ENCODE measurements at regions of chr11 and their contacts with region 1.

Region 1: GRCh38 chr11:31509429-31510345 is at the starts of genes ELP4 and IMMP1L:
- DNase-seq: peak; percentile 97
- ATAC-seq: peak; percentile 100
- H3K4me3 Mint-ChIP-seq: peak within 1 kb of the TSS; percentile 98
- H3K27ac Mint-ChIP-seq: peak within 1 kb of the TSS; percentile 88
- H3K4me1 Mint-ChIP-seq: peaks cover 36% of the 10 kb centered on the region
- H3K27me3 Mint-ChIP-seq: no peaks in the 10 kb centered on the region
- total RNA-seq, gene ELP4: 21.9 to 30.9 TPM
- total RNA-seq, gene IMMP1L: 18.8 to 21.0 TPM

Region 2: GRCh38 chr11:31484497-31484896 is 25.2 kb before region 1 on chr11:
- CTCF ChIA-PET with region 1: no interaction called
- POLR2A ChIA-PET with region 1: no interaction called
- intact Hi-C with region 1: no loop called
- DNase-seq: no peak
- ATAC-seq: no peak
- H3K4me3 Mint-ChIP-seq: no peak overlapping the region
- H3K27ac Mint-ChIP-seq: no peak overlapping the region
- H3K4me1 Mint-ChIP-seq: peaks cover 2% of the 10 kb centered on the region
- H3K27me3 Mint-ChIP-seq: no peaks in the 10 kb centered on the region

Region 3: DNA sequence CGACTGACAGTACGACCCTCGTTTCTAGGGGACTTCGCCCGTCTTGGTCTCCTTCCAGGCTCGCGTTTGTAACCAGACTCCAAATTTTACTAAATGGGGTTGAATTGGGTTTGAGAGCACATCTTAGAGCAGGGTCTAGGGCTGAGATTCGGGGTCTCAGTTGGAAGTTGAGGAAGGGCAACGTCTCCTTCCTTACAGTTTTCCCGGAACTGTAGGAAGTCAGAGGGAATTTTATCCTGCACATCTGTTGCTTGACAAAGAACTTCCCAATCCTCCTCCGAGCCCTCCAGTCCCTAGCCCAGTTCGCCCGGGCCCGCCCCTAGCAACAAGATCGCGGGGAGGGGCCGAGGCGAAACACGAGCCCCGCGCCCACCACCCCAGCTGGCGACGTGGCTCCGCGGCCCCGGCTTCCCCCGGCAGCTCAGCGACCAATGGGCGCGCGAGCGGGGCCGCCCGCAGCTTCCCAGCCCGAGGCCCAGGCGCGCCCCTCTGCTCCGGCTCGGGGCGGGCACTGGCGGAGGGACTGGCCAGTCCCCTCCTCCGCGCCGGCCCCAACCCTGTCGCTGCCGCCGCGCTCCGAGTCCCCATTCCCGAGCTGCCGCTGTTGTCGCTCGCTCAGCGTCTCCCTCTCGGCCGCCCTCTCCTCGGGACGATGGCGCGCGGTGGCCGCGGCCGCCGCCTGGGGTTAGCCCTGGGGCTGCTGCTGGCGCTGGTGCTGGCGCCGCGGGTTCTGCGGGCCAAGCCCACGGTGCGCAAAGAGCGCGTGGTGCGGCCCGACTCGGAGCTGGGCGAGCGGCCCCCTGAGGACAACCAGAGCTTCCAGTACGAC is 581.1 kb after region 1 on chr11 and contains the start of gene RCN1:
- CTCF ChIA-PET with region 1: no interaction called
- POLR2A ChIA-PET with region 1: no interaction called
- intact Hi-C with region 1: loop called in 1 of 2 experiments (anchors 1 kb)
- DNase-seq: peak; percentile 62
- ATAC-seq: peak; percentile 59
- H3K4me3 Mint-ChIP-seq: peak within 1 kb of the TSS; percentile 79
- H3K27ac Mint-ChIP-seq: peak within 1 kb of the TSS; percentile 85
- H3K4me1 Mint-ChIP-seq: peaks cover 43% of the 10 kb centered on the region
- H3K27me3 Mint-ChIP-seq: peaks cover 10% of the 10 kb centered on the region
- total RNA-seq, gene RCN1: 19.1 to 24.1 TPM

Measured in activated CD4-positive, alpha-beta T cell treated with anti-CD3 and anti-CD28 coated beads for 36 hours (primary cell).